ENCODE measurements at regions of chr17 and their contacts with region 1.

Region 1: DNA sequence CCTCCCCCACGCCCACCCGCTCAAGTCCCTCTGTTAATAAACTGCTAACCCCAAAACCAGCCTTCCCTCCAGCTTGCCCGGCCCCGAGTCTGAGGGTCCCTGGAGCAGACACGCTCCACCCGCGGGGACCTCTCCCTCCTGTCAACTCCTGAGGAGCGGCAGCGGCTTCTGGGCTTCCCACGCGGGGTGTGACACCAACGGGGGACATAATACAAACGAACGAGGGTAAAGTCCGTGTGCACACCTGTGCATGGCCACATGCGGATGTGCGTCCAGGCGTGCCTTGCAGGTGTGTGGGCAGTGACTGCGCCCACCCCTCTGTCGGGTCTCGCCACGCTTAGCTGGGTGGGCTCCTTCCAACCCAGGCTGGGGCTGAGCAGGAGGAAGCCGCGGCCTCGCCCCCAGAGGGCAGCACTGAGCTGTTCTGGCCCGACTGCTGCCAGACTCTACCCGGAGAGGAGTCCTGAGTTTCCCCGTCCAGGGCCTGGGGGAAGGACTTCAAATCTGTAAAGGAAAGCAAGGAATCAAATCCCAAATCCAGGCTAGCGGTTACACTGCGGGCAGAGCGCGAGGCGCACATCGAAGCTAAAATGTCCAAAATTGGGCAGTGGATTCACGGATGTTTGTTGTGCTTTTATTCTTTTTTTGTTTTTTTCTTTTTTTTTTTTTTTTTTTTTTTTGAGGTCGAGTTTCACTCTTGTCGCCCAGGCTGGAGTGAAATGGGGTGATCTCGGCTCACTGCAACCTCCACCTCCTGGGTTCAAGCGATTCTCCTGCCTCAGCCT is 24.2 kb upstream of the KRT17 start:
- DNase-seq: peak; percentile 65 to 92 (median 86)
- ATAC-seq: peak; percentile 90
- H3K4me3 ChIP-seq: peak overlapping the region; percentile 52 to 55
- H3K4me3 Mint-ChIP-seq: peak overlapping the region; percentile 80
- H3K27ac ChIP-seq: no peak overlapping the region
- H3K27ac Mint-ChIP-seq: no peak overlapping the region
- H3K4me1 ChIP-seq: peaks cover 13% of the 10 kb centered on the region
- H3K4me1 Mint-ChIP-seq: peaks cover 9% of the 10 kb centered on the region
- H3K27me3 ChIP-seq: no peaks in the 10 kb centered on the region
- H3K27me3 Mint-ChIP-seq: no peaks in the 10 kb centered on the region
- CTCF ChIP-seq: peak; percentile 70

Region 2: GRCh38 chr17:40903129-40904065 is 745.2 kb before region 1 on chr17:
- CTCF ChIA-PET with region 1: interaction called, 82 read pairs
- POLR2A ChIA-PET with region 1: no interaction called
- intact Hi-C with region 1: no loop called
- DNase-seq: no peak
- ATAC-seq: no peak
- H3K4me3 ChIP-seq: no peak overlapping the region
- H3K4me3 Mint-ChIP-seq: no peak overlapping the region
- H3K27ac ChIP-seq: no peak overlapping the region
- H3K27ac Mint-ChIP-seq: no peak overlapping the region
- H3K4me1 ChIP-seq: no peaks in the 10 kb centered on the region
- H3K4me1 Mint-ChIP-seq: no peaks in the 10 kb centered on the region
- H3K27me3 ChIP-seq: peaks cover 0 to 7% of the 10 kb centered on the region in 2 experiments
- H3K27me3 Mint-ChIP-seq: peaks cover 47% of the 10 kb centered on the region
- CTCF ChIP-seq: no peak

Region 3: GRCh38 chr17:41322094-41322902 is 326.3 kb before region 1 on chr17:
- CTCF ChIA-PET with region 1: interaction called, 14 read pairs
- POLR2A ChIA-PET with region 1: no interaction called
- intact Hi-C with region 1: loop called in 1 of 2 experiments (anchors 2 kb)
- DNase-seq: peak in 4 of 9 experiments; percentile 29 to 75 (median 56)
- ATAC-seq: peak; percentile 86
- H3K4me3 ChIP-seq: no peak overlapping the region
- H3K4me3 Mint-ChIP-seq: no peak overlapping the region
- H3K27ac ChIP-seq: no peak overlapping the region
- H3K27ac Mint-ChIP-seq: peak overlapping the region; percentile 62
- H3K4me1 ChIP-seq: peaks cover 51% of the 10 kb centered on the region
- H3K4me1 Mint-ChIP-seq: peaks cover 47% of the 10 kb centered on the region
- H3K27me3 ChIP-seq: no peaks in the 10 kb centered on the region
- H3K27me3 Mint-ChIP-seq: no peaks in the 10 kb centered on the region
- CTCF ChIP-seq: peak; percentile 86

Region 4: GRCh38 chr17:41567317-41567716 is 81.3 kb before region 1 on chr17:
- CTCF ChIA-PET with region 1: interaction called, 10 read pairs
- POLR2A ChIA-PET with region 1: no interaction called
- intact Hi-C with region 1: no loop called
- DNase-seq: peak in 3 of 9 experiments; percentile 20 to 36 (median 30)
- ATAC-seq: no peak
- H3K4me3 ChIP-seq: no peak overlapping the region
- H3K4me3 Mint-ChIP-seq: no peak overlapping the region
- H3K27ac ChIP-seq: peak overlapping the region in 1 of 2 experiments; percentile 77
- H3K27ac Mint-ChIP-seq: peak overlapping the region; percentile 84
- H3K4me1 ChIP-seq: peaks cover 5% of the 10 kb centered on the region
- H3K4me1 Mint-ChIP-seq: peaks cover 12% of the 10 kb centered on the region
- H3K27me3 ChIP-seq: peaks cover 0 to 6% of the 10 kb centered on the region in 2 experiments
- H3K27me3 Mint-ChIP-seq: peaks cover 26% of the 10 kb centered on the region
- CTCF ChIP-seq: no peak

Region 5: GRCh38 chr17:41620586-41621434 is 27.8 kb before region 1 on chr17:
- CTCF ChIA-PET with region 1: no interaction called
- POLR2A ChIA-PET with region 1: no interaction called
- intact Hi-C with region 1: no loop called
- DNase-seq: no peak
- ATAC-seq: no peak
- H3K4me3 ChIP-seq: no peak overlapping the region
- H3K4me3 Mint-ChIP-seq: no peak overlapping the region
- H3K27ac ChIP-seq: no peak overlapping the region
- H3K27ac Mint-ChIP-seq: no peak overlapping the region
- H3K4me1 ChIP-seq: no peaks in the 10 kb centered on the region
- H3K4me1 Mint-ChIP-seq: no peaks in the 10 kb centered on the region
- H3K27me3 ChIP-seq: no peaks in the 10 kb centered on the region
- H3K27me3 Mint-ChIP-seq: peaks cover 9% of the 10 kb centered on the region
- CTCF ChIP-seq: no peak

Region 6: GRCh38 chr17:41688699-41689496 is 40.3 kb after region 1 on chr17 and contains the start of gene EIF1:
- CTCF ChIA-PET with region 1: interaction called, 12 read pairs
- POLR2A ChIA-PET with region 1: interaction called, 13 read pairs
- intact Hi-C with region 1: no loop called
- DNase-seq: peak; percentile 99 to 100 (median 100)
- ATAC-seq: peak; percentile 76
- H3K4me3 ChIP-seq: peak within 1 kb of the TSS; percentile 65 to 89
- H3K4me3 Mint-ChIP-seq: peak within 1 kb of the TSS; percentile 95
- H3K27ac ChIP-seq: peak within 1 kb of the TSS; percentile 93 to 100
- H3K27ac Mint-ChIP-seq: peak within 1 kb of the TSS; percentile 99
- H3K4me1 ChIP-seq: peaks cover 31% of the 10 kb centered on the region
- H3K4me1 Mint-ChIP-seq: peaks cover 36% of the 10 kb centered on the region
- H3K27me3 ChIP-seq: no peaks in the 10 kb centered on the region
- H3K27me3 Mint-ChIP-seq: no peaks in the 10 kb centered on the region
- CTCF ChIP-seq: no peak
- total RNA-seq, gene EIF1: 3,749 to 3,996 TPM

Measured in CD8-positive, alpha-beta T cell (primary cell).